ENCODE measurements at regions of chr3 and their contacts with region 1.

Region 1: GRCh38 chr3:108818404-108818803 is 4.2 kb upstream of the TRAT1 start:
- DNase-seq: peak; percentile 60
- H3K4me3 Mint-ChIP-seq: peak overlapping the region; percentile 58
- H3K27ac Mint-ChIP-seq: peak overlapping the region; percentile 18
- H3K4me1 Mint-ChIP-seq: peaks cover 45% of the 10 kb centered on the region
- H3K27me3 Mint-ChIP-seq: no peaks in the 10 kb centered on the region

Region 2: DNA sequence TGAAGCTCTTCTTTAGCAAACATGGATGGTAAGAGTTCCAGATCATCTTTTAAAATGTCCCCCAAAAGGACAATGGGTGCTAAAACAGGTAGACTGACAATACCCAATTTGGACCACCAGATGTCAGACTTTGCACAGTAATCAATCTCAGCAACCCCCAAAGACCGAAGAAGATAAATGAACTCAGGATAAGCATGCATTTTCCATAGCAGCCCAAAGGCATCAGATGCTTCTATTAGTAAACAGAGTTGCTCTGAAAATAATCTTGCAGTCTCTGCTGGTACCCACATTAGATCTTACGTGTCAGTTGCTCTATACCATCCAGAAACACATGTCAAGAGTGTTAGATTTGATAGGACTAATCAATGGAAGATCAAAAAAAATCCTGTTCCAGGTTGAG is 328.6 kb before region 1 on chr3:
- intact Hi-C with region 1: loop called (anchors 1 kb)
- DNase-seq: no peak
- H3K4me3 Mint-ChIP-seq: no peak overlapping the region
- H3K27ac Mint-ChIP-seq: no peak overlapping the region
- H3K4me1 Mint-ChIP-seq: peaks cover 4% of the 10 kb centered on the region
- H3K27me3 Mint-ChIP-seq: peaks cover 5% of the 10 kb centered on the region

Region 3: GRCh38 chr3:108662130-108662738 is 156.2 kb before region 1 on chr3:
- intact Hi-C with region 1: loop called (anchors 1 kb)
- DNase-seq: peak; percentile 17
- H3K4me3 Mint-ChIP-seq: no peak overlapping the region
- H3K27ac Mint-ChIP-seq: no peak overlapping the region
- H3K4me1 Mint-ChIP-seq: peaks cover 17% of the 10 kb centered on the region
- H3K27me3 Mint-ChIP-seq: no peaks in the 10 kb centered on the region

Region 4: DNA sequence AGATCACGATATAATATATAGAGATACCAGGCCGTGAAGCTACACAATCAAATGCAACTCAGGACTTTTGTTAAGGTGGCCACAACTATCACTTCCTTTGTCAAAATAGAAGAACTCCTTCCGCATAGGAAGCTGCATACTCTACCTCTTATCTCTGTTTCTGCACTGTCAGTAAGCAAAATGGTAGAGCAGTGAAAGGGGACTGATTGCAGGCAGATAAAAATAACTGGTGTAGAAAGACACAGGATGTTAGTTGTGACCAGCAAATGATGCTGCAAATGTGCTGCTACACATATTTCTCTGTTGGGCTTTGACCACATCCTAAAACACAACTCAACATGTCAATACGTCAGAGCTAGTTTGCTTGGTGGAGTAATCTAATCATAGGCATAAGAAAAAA is 12.1 kb before region 1 on chr3:
- intact Hi-C with region 1: loop called (anchors 1 kb)
- DNase-seq: peak; percentile 53
- H3K4me3 Mint-ChIP-seq: no peak overlapping the region
- H3K27ac Mint-ChIP-seq: peak overlapping the region; percentile 87
- H3K4me1 Mint-ChIP-seq: peaks cover 23% of the 10 kb centered on the region
- H3K27me3 Mint-ChIP-seq: peaks cover 5% of the 10 kb centered on the region

Region 5: GRCh38 chr3:108877901-108878300 is 59.5 kb after region 1 on chr3:
- intact Hi-C with region 1: no loop called
- DNase-seq: no peak
- H3K4me3 Mint-ChIP-seq: no peak overlapping the region
- H3K27ac Mint-ChIP-seq: no peak overlapping the region
- H3K4me1 Mint-ChIP-seq: peaks cover 10% of the 10 kb centered on the region
- H3K27me3 Mint-ChIP-seq: no peaks in the 10 kb centered on the region

Region 6: GRCh38 chr3:108946292-108947290 is 128.2 kb after region 1 on chr3:
- intact Hi-C with region 1: no loop called
- DNase-seq: no peak
- H3K4me3 Mint-ChIP-seq: no peak overlapping the region
- H3K27ac Mint-ChIP-seq: no peak overlapping the region
- H3K4me1 Mint-ChIP-seq: no peaks in the 10 kb centered on the region
- H3K27me3 Mint-ChIP-seq: peaks cover 4% of the 10 kb centered on the region

Measured in activated T-helper 1 cell treated with anti-CD3 and anti-CD28 coated beads, Interleukin-12 subunit alpha, Interleukin-12 subunit beta, Interleukin-2, Interleukin-4 antibody, amounts not matched to agents 30 ng/mL and 10 ng/mL and 1 ng/mL, durations not matched to agents 14 hours and 24 hours and 36 hours (primary cell).